A549 (cell line): ENCODE measurements at regions of chr17 and their contacts with region 1.

Region 1: DNA sequence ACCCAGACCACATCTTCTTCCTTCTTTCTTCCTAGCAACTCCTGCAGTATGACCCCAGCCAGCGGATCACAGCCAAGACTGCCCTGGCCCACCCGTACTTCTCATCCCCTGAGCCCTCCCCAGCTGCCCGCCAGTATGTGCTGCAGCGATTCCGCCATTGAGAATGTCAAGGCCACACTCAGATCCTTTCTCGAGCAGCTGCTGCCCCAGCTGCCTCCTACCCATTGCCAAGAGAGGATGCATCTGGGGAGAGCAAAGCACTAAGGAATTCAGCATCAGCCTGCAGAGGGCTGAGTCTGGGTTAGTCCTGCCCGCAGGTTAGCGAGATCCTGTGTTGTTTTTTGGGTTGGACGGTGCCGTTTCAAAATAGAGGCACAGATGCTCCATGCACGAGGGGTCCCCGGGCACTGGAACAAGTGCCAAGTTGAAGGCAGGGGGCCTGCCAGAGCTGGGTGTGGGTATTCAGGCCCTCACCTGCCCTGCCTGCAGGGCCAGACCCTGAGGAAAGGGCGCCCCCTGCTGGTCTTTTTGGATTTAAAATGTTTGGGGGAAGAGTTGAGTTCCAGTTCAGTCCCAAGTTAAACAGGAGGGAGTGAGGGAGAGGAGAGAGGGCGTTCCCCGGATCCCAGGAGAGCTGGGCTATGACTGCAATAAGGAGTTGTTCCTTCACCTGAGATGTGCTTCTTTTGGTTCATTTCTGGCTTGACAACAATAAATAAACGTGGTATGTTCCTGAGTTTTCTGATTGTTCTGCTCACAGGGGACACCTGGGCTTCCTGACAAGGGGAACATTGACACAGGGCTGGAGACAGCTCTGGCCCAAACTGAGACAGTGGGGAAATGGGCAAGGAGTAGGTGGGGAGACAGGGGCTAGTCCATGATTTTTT is 4.9 kb downstream of the CDK3 start:
- DNase-seq: peak; percentile 78 to 83
- ATAC-seq: peak; percentile 55 to 80; a peak in 5 of 6 replicates
- H3K4me3 ChIP-seq: no peak overlapping the region
- H3K27ac ChIP-seq: no peak overlapping the region
- H3K4me1 ChIP-seq: no peaks in the 10 kb centered on the region
- CTCF ChIP-seq: peak; percentile 94
- EP300 ChIP-seq: no peak
- POLR2A ChIP-seq: no peak
- RAD21 ChIP-seq: peak; percentile 81 to 88

Region 2: GRCh38 chr17:75927286-75927922 is 78.1 kb before region 1 on chr17:
- CTCF ChIA-PET with region 1: interaction called, 16 read pairs
- POLR2A ChIA-PET with region 1: no interaction called
- DNase-seq: peak; percentile 62 to 80
- ATAC-seq: peak; percentile 62 to 88; a peak in 5 of 6 replicates
- H3K4me3 ChIP-seq: no peak overlapping the region
- H3K27ac ChIP-seq: no peak overlapping the region
- H3K4me1 ChIP-seq: no peaks in the 10 kb centered on the region
- CTCF ChIP-seq: peak; percentile 32
- EP300 ChIP-seq: no peak
- POLR2A ChIP-seq: no peak
- RAD21 ChIP-seq: peak in 1 of 2 experiments; percentile 31; a peak in 2 of 5 replicates

Region 3: DNA sequence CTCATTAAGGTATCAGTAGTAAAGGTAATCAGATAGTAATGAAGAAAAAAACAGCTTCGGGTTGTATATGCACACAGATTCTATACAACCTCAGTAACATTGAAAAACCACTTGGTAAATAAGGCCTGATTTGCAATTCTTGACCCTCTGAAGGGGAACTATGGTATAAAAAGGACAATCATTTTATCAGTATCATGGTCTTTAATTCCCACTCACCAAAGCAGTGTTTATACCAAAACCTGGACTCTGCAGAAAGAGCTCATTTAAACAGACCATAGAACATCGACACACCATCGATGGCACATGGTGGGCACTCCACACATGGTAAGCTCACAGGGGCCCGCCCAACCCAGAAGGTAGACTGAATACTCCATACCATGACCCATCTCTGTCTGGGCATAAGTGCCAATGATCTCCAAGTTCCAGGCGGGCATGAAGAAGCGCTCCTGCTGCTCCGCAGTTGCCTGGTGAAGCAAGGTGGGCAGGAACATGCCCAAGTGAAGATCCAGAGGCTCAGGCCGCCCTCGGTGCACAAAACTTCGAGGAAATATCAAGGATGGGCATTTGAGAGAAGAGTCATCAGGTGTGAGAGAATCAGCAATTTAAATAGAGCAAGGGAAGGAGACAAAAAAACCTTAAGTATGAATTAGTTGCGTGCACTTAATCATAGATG is 45.5 kb before region 1 on chr17:
- CTCF ChIA-PET with region 1: interaction called, 17 read pairs
- POLR2A ChIA-PET with region 1: no interaction called
- DNase-seq: no peak
- ATAC-seq: peak; percentile 34 to 52; a peak in 4 of 6 replicates
- H3K4me3 ChIP-seq: no peak overlapping the region
- H3K27ac ChIP-seq: no peak overlapping the region
- H3K4me1 ChIP-seq: peaks cover 17% of the 10 kb centered on the region; the same call in 2 of the 3 replicates
- CTCF ChIP-seq: no peak
- EP300 ChIP-seq: no peak
- POLR2A ChIP-seq: no peak
- RAD21 ChIP-seq: no peak

Region 4: DNA sequence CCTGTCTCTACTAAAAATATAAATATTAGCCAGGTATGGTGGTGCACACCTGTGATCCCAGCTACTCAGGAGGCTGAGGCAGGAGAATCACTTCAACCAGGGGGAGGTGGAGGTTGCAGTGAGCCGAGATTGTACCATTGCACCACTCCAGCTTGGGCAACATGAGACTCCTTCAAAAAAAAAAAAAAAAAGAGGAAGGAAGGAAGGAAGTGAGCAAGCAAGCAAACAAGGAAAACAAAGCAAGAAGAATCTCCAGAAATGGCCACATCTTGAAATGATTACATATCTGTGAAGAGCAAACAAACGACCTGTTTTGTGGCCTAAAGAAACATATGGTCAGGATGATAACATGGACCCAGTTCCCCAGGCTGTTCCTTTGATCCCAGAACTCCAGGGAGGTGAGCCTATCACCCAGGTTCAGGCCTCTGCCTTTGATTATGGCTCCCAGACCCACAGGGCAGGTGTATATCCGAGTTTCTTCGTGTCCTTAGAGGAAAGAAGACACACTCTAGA is 35.4 kb before region 1 on chr17:
- CTCF ChIA-PET with region 1: interaction called, 10 read pairs
- POLR2A ChIA-PET with region 1: no interaction called
- DNase-seq: peak in 1 of 2 experiments; percentile 21
- ATAC-seq: no peak
- H3K4me3 ChIP-seq: no peak overlapping the region
- H3K27ac ChIP-seq: no peak overlapping the region
- H3K4me1 ChIP-seq: 0 out of 3 replicates have a peak, but pooled peaks cover 3% of the 10 kb centered on the region
- CTCF ChIP-seq: no peak
- EP300 ChIP-seq: no peak
- POLR2A ChIP-seq: no peak
- RAD21 ChIP-seq: no peak

Region 5: DNA sequence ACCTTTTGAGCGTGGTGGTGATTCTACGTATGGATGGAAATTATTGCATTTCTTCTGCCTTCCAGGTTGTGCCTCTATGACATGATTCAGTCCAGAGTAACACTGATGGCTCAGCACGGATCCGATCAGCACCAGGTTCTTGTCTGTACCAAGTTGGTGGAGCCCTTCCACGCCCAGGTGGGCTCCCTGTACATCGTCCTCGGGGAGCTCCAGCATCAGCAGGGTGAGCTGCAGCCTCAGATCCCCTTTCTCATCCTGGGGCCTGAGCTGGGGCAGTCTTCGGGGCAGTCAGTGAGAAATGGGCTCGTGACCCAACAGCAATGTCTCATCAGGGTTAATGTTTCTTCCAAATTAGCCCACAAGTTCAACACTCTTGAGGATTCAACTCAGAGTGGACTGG is 14.1 kb before region 1 on chr17:
- CTCF ChIA-PET with region 1: interaction called, 408 read pairs
- POLR2A ChIA-PET with region 1: no interaction called
- DNase-seq: no peak
- ATAC-seq: 0 out of 6 replicates have a peak, but pooled peaks of 1 of the 2 experiments have one; percentile 23
- H3K4me3 ChIP-seq: no peak overlapping the region
- H3K27ac ChIP-seq: no peak overlapping the region
- H3K4me1 ChIP-seq: no peaks in the 10 kb centered on the region
- CTCF ChIP-seq: no peak
- EP300 ChIP-seq: no peak
- POLR2A ChIP-seq: no peak
- RAD21 ChIP-seq: no peak

Region 6: DNA sequence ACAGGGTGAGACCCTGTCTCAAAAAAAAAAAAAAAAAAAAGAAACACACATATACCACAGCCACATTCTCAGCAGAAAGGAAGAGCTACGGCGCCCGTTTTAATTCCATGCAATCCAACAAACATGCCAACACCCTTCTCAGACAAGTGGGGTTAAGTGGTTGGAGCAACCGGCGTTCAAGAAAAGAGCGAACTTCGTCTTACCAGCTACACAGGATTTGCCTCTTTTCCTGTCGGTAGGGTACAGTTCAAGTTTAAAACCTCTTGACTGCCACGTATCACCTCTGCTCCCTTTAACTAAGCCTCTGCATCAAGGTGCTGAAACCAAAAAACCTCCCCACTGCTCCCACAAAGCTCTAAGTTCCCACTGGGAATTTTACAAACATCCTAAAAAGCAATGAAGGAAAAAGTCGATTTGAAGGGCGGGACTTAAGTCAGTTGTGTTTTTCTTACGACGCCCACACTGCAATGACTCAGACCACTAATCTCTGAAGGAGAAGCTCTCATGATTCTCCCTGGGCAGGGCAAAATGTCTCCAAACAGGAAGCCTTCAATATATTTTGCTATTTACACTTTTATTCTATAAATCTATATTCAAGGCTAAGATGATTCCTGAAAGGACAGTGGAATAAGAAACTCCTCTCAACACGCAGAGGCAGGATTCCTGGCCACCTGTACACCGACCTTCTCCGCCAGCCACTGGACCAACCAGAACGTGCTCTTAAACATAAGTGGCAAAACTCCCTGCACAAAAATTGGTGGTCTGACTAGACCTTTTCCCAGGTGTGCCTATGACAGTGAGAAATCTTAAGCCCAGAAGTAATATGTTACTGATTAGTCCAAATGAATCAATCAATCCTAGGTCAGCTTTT is 48.0 kb after region 1 on chr17:
- CTCF ChIA-PET with region 1: interaction called, 357 read pairs
- POLR2A ChIA-PET with region 1: no interaction called
- DNase-seq: peak; percentile 27 to 45
- ATAC-seq: peak in 1 of 2 experiments; percentile 50; a peak in 3 of 6 replicates
- H3K4me3 ChIP-seq: no peak overlapping the region
- H3K27ac ChIP-seq: no peak overlapping the region
- H3K4me1 ChIP-seq: peaks cover 7% of the 10 kb centered on the region; the same call in 2 of the 3 replicates
- CTCF ChIP-seq: no peak
- EP300 ChIP-seq: no peak
- POLR2A ChIP-seq: no peak
- RAD21 ChIP-seq: no peak

Region 7: GRCh38 chr17:76091526-76092285 is 86.2 kb after region 1 on chr17:
- CTCF ChIA-PET with region 1: interaction called, 12 read pairs
- POLR2A ChIA-PET with region 1: no interaction called
- DNase-seq: no peak
- ATAC-seq: no peak
- H3K4me3 ChIP-seq: no peak overlapping the region
- H3K27ac ChIP-seq: no peak overlapping the region
- H3K4me1 ChIP-seq: no peaks in the 10 kb centered on the region
- CTCF ChIP-seq: no peak
- EP300 ChIP-seq: no peak
- POLR2A ChIP-seq: no peak
- RAD21 ChIP-seq: no peak

Region 8: GRCh38 chr17:76232342-76232741 is 226.8 kb after region 1 on chr17:
- CTCF ChIA-PET with region 1: no interaction called
- POLR2A ChIA-PET with region 1: no interaction called
- DNase-seq: no peak
- ATAC-seq: peak in 1 of 2 experiments; percentile 62; a peak in 2 of 6 replicates
- H3K4me3 ChIP-seq: no peak overlapping the region
- H3K27ac ChIP-seq: no peak overlapping the region
- H3K4me1 ChIP-seq: peaks cover 22% of the 10 kb centered on the region
- CTCF ChIP-seq: no peak
- EP300 ChIP-seq: no peak
- POLR2A ChIP-seq: no peak
- RAD21 ChIP-seq: no peak